ENCODE measurements at regions of chr14 and their contacts with region 1.

Region 1: GRCh38 chr14:23379366-23380196 is 2.7 kb downstream of the CMTM5 start:
- DNase-seq: peak; percentile 62 to 77
- H3K4me3 ChIP-seq: no peak overlapping the region
- H3K27ac ChIP-seq: no peak overlapping the region
- H3K4me1 ChIP-seq: peaks cover 0 to 5% of the 10 kb centered on the region in 2 donors
- H3K27me3 ChIP-seq: no peaks in the 10 kb centered on the region
- CTCF ChIP-seq: peak; percentile 63 to 96 (median 86)
- POLR2A ChIP-seq: no peak

Region 2: GRCh38 chr14:23327947-23328744 is 51.4 kb before region 1 on chr14:
- intact Hi-C with region 1: loop called (anchors 5 kb)
- DNase-seq: peak; percentile 61 to 71
- H3K4me3 ChIP-seq: no peak overlapping the region
- H3K27ac ChIP-seq: no peak overlapping the region
- H3K4me1 ChIP-seq: no peaks in the 10 kb centered on the region
- H3K27me3 ChIP-seq: no peaks in the 10 kb centered on the region
- CTCF ChIP-seq: peak; percentile 83 to 93 (median 87)
- POLR2A ChIP-seq: no peak

Measured in breast epithelium (tissue), 4 donors.